Common myeloid progenitor, CD34-positive (primary cell): ENCODE measurements at regions of chr17 and their contacts with region 1.

Region 1: DNA sequence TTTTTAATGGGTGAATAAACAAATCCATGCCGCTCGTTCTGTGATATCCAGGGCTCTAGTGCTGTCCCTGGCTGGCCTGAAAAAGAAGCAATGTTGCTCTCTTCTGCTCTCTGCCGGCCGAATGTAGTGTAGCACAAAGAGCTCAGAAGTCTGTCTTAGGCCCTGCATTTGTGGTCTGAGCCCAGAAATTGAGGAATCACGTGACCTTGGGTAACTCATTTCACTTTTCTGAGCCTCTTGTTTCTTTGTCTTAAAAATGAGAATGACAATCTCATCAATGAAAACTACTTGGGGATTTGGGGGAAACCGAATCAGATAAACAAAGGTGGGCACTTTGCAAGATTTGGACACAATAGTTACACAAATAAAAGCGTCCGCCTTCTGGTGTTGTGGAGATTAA is 381.6 kb upstream of the ASIC2 start:
- DNase-seq: peak; percentile 66 to 83 (median 79)
- H3K4me3 ChIP-seq: no peak overlapping the region
- H3K27ac ChIP-seq: no peak overlapping the region
- H3K4me1 ChIP-seq: no peaks in the 10 kb centered on the region
- H3K27me3 ChIP-seq: peaks cover 0 to 3% (median 0%) of the 10 kb centered on the region in 5 experiments

Region 2: GRCh38 chr17:33520426-33521330 is 154.0 kb before region 1 on chr17:
- CTCF ChIA-PET with region 1: interaction called, 23 read pairs
- POLR2A ChIA-PET with region 1: no interaction called
- DNase-seq: peak; percentile 47 to 63 (median 49)
- H3K4me3 ChIP-seq: no peak overlapping the region
- H3K27ac ChIP-seq: no peak overlapping the region
- H3K4me1 ChIP-seq: no peaks in the 10 kb centered on the region
- H3K27me3 ChIP-seq: peaks cover 0 to 14% (median 0%) of the 10 kb centered on the region in 5 experiments

Region 3: DNA sequence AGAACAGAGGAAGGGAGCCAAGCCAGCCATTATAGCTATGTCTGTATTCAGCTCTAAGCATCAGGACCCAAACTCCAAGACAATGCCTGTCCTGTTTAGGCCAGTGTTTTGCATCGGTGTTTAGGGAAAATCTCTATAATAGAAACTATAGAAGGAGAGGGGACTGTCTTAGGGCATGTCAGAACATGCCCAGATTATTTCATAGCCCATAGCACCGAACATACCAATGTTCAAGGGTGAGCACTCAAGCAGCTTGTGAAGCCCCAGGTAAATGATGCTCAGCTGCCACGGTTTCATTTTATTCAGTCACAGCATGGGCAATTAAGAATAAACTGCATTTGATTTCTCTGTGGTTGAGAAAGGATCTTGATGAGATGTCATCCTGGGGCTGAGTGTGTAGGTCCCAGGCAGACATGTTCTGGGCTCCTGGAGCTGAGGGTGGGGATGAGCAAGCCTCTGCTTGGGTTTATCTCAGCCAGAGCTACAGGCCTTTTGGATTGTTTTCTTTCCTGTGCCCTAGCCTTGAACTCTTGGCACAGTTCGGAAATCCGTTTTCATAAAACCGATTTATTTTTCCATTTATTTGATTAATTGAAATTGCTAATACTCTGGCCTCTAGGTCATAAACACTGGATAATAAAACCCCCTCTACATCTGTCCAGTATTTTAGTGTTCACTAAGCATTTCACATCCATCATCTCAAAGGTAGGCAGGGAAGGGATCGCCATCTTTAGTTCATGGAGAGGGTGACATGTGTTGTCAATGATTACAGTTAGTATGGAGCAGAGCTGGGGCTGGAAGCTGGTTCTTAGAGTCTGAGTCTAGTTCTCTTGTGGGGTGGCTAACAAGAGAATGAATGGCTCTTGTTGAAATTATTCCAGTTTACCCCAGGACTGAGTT is 90.9 kb before region 1 on chr17:
- CTCF ChIA-PET with region 1: no interaction called
- POLR2A ChIA-PET with region 1: no interaction called
- DNase-seq: no peak
- H3K4me3 ChIP-seq: no peak overlapping the region
- H3K27ac ChIP-seq: no peak overlapping the region
- H3K4me1 ChIP-seq: no peaks in the 10 kb centered on the region
- H3K27me3 ChIP-seq: peaks cover 0 to 23% (median 0%) of the 10 kb centered on the region in 5 experiments